ENCODE measurements at regions of chr9 and their contacts with region 1.

Region 1: DNA sequence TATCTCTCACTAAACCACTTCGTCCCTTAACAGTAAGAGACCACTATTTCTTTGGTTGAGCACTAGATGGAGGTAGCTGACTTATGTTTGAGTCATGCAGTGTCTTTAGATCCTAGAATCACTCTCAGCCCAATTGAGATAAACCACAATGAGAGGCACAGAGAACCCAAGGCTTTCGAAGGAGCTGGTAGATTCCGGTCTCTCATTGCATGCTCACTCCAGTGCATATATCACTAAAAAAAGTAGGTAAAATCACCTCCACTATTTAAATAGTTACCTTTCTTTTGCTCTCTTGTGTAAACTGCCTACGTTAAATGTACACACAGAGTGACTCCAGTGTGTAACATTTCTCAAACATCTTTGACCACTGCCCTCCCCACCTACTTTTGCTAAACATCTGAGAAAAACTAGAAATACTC is 27.6 kb downstream of the ACTL7A start:
- DNase-seq: no peak
- ATAC-seq: peak; percentile 79

Region 2: DNA sequence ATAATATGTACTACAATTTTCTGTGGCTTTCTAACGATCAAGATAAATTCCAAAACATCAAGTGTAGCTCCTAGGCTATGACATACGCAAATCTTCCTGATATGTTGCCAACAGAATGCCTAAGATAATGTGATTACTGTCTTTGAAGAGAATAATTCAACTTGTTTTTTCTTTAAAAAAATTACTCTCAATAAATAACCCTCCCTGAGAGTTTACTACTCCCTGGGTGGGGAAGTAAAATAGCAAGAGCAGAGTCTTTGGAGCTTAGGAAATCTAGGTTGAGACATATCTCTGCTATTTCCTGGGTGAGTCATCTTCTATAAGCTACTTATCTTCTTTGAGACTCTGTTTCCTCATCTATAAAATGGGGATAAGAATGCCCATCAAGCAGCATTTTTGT is 235.1 kb before region 1 on chr9:
- intact Hi-C with region 1: no loop called
- DNase-seq: no peak
- ATAC-seq: no peak

Region 3: GRCh38 chr9:108933718-108934322 is 44.2 kb after region 1 on chr9 and contains the start of gene ELP1:
- intact Hi-C with region 1: no loop called
- DNase-seq: peak; percentile 95
- ATAC-seq: peak; percentile 95
- total RNA-seq, gene ELP1: 20.1 TPM

Region 4: DNA sequence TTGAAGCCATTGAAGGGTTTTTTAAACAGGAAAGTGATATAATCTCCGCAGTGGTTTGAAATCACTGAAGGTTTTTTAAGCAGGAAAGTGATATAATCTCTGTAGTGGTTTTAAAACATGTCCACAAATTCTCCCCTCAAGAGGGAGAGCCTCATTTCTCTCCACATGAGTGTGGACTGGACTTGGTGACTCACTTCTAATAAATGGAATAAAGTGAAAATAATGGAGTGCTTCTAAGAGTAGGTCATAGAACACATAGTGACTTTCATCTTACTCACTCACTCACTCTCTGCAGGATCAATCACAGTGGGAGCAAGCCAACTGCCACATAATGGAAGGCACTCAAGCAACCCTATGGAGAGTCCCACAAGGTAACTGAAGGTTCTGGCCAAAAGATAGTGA is 111.6 kb after region 1 on chr9:
- intact Hi-C with region 1: no loop called
- DNase-seq: no peak
- ATAC-seq: no peak

Region 5: GRCh38 chr9:109401168-109401989 is 511.7 kb after region 1 on chr9:
- intact Hi-C with region 1: loop called (anchors 10 kb)
- DNase-seq: no peak
- ATAC-seq: peak; percentile 52